ENCODE measurements at regions of chr5 and their contacts with region 1.

Region 1: DNA sequence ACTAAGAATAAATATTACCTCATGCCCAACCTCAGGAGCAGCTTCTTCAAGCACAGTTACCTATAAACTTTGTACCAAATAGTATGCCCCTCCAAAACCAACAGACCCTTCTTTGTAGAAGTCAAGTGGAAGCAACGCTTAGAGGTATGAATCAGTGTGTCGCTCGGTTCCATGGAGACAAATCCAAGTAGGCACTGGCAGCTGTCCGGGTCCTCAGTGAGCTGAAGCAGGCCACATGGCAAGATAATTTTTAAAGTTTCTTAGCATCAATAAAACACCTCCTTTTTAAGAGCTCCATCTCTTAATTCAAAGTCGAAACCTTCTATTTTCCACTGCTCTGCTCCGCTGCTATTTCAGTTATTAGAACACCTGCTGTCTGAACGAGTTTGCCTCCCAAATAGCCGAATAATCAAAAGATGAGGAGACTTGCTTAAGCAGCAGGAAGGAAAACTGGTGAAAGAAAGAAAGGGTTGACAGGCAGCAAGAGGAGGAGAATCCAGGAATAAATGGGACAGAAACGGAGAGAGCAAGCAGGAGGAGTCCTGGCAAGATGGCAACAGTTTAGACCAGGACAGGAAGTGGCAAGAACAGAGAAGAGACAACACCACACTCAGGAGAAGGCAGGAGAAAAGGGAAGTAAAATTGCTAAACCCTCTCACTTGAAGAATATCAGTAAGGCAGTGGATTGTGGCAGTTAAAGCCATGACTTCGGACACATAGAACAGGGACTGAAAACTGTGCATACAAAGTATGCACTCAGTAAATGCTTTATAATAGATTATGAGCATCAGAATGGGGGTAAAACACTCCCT is 65.0 kb downstream of the PPP2R2B start:
- DNase-seq: no peak
- H3K4me3 ChIP-seq: no peak overlapping the region
- H3K27ac ChIP-seq: no peak overlapping the region
- H3K4me1 ChIP-seq: no peaks in the 10 kb centered on the region
- CTCF ChIP-seq: no peak

Region 2: DNA sequence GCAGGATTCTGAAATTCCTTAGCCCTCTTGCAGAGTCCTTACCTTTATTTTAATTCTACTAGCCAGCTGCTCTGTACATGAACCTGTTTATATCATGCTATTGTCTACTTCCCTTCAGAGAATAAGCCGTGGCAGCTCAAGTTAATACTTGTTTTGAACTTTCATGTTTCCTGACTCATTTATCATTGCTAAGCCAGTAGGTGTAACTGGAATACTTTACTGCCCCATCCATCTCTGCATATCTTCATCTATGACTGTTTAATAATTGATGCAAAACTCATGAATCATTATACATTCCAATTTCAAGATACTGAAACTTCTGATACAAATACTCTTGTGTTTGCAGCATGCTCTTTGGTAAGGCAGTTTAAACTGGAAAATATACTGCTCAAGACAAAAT is 109.7 kb before region 1 on chr5:
- CTCF ChIA-PET with region 1: no interaction called
- POLR2A ChIA-PET with region 1: interaction called, 10 read pairs
- intact Hi-C with region 1: no loop called
- DNase-seq: no peak
- H3K4me3 ChIP-seq: no peak overlapping the region
- H3K27ac ChIP-seq: no peak overlapping the region
- H3K4me1 ChIP-seq: no peaks in the 10 kb centered on the region
- CTCF ChIP-seq: no peak

Region 3: GRCh38 chr5:146718609-146719008 is 94.9 kb before region 1 on chr5:
- CTCF ChIA-PET with region 1: no interaction called
- POLR2A ChIA-PET with region 1: no interaction called
- intact Hi-C with region 1: no loop called
- DNase-seq: no peak
- H3K4me3 ChIP-seq: no peak overlapping the region
- H3K27ac ChIP-seq: no peak overlapping the region
- H3K4me1 ChIP-seq: no peaks in the 10 kb centered on the region
- CTCF ChIP-seq: no peak

Region 4: GRCh38 chr5:146832985-146833734 is 19.6 kb after region 1 on chr5:
- CTCF ChIA-PET with region 1: no interaction called
- POLR2A ChIA-PET with region 1: no interaction called
- intact Hi-C with region 1: loop called (anchors 2 kb)
- DNase-seq: no peak
- H3K4me3 ChIP-seq: no peak overlapping the region
- H3K27ac ChIP-seq: no peak overlapping the region
- H3K4me1 ChIP-seq: no peaks in the 10 kb centered on the region
- CTCF ChIP-seq: no peak

Measured in OCI-LY7 (cell line).